Right ventricle myocardium inferior (tissue), 1 donor: ENCODE measurements at regions of chr15 and their contacts with region 1.

Region 1: DNA sequence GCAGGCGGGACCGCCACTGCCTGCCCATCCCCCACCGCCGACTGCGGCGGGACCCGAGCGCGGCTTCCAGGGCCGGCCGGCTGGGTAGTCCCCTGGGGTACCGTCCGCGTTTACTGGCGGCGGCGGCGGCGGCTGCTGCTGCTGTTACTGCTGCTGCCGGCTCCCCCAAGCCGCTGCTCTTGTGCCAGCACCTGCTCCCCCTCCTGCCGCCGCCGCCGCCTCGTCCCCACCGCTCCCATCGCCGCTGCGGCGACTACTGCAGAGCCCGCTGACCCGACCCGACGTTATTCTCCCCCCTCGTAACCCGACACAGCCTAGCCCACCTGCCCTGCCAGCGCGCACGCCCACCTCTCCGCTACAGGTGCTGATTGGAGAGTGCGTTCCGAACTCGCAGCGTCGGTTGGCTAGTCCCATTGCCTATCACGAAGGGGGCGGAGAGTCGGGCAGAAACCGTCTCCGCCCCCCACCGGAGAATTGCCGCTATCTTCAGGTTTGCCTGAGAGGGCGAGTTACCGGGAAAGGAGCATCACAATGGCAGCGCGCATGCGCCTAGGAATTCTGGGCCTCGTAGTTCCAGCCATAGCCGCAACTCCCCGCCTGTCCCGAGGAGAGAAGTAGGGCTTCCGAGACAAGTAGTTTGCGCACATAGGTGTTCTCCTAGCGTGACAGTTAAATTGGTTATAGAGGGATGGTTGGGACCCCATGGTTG is at the start of gene TTBK2:
- DNase-seq: peak; percentile 98
- ATAC-seq: peak; percentile 99
- total RNA-seq, gene TTBK2: 20.6 TPM

Region 2: GRCh38 chr15:42736793-42737528 is 183.7 kb before region 1 on chr15 and contains the start of gene CDAN1:
- intact Hi-C with region 1: loop called (anchors 10 kb)
- DNase-seq: peak; percentile 95
- ATAC-seq: peak; percentile 97
- total RNA-seq, gene CDAN1: 6.2 TPM

Region 3: DNA sequence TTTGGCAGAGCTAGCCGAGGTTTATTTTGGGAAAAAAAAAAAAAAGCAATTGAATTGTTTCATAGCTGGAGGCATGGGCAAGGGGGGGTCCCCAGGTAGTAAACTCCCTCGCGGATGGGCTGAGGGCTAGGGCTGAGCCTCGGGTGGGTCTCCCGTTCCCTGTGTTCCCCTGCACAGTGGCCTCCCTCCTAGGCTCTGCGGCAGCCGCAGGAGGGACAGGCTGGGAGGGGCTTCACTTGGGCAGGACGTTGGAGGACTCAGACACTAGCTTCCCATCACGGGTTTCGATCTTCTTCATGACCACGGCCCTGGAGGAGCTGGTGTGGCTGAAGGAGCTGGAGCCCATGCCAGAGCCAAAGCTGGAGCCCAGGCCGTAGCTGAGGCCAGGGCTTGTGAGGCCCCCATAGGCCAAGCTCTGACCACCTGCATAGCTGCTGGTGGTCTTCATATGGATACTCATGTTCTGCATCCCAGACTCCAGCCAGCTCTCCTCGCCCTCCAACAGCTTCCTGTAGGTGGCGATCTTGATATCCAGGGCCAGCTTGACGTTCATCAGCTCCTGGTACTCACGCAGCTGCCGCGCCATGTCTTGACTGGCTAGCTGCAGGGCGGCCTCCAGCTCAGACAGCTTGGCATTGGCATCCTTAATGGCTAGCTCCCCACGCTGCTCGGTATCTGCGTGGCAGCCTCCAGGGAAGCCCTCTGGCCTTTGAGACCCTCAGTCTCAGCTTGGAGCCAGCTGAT is 119.8 kb before region 1 on chr15:
- intact Hi-C with region 1: loop called (anchors 5 kb)
- DNase-seq: no peak
- ATAC-seq: no peak

Region 4: DNA sequence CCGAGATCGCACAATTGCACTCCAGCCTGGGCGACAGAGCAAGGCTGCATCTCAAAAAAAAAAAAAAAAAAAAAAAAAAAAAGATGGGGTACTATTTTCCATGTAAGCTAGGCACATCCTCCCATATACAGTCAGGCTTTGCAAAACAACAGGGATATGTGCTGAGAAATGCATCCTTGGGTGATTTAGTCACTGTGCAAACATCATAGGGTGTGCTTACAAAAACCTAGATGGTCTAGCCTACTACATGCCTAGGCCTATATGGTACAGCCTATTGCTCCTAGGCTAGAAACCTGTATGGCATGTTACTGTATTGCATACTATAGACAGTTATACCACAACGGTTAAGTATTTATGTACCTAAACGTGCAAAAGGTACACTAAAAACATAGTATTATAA is 75.1 kb before region 1 on chr15:
- intact Hi-C with region 1: no loop called
- DNase-seq: no peak
- ATAC-seq: no peak

Region 5: DNA sequence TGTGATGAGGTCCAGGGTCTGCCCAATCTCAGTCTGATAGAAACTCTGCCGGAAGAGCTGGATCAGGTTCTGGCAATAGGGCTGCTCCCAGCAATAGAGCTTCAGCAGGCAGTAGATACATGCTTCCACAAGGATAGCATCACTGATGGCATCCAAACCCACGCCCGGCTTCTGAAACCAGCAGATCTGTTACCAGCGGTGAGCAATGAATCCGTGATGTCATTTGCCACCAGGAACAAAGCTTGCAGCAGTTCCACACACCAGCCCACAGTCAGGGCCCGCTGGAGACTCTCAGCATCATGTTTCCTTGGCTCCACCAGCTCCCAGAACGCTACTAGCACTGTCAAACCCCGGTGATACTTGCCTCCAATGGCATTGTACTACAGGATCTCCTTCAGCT is 19.2 kb after region 1 on chr15:
- intact Hi-C with region 1: no loop called
- DNase-seq: no peak
- ATAC-seq: no peak